ENCODE measurements at regions of chr14 and their contacts with region 1.

Region 1: DNA sequence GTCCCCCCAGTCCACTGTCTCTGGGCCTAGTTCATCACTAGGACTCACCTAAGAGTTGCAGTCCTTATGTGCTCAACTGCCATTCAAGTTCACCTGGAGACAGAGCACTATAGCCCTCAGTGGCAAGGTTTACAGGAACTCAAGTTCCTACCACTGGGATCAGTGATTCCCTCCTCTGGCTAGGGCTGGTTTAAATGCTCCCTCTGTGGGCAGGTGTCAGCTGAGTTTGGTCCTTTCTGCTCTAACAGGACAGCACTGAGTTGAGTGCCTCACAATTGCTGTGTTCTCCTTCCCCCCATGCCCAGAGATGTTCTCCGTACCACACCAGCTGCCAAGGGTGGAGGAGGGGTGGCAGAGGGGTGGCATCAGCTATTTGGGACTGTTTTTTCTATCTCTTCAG is 20.8 kb upstream of the SAV1 start:
- H3K4me3 Mint-ChIP-seq: no peak overlapping the region
- H3K27ac Mint-ChIP-seq: no peak overlapping the region
- H3K4me1 Mint-ChIP-seq: no peaks in the 10 kb centered on the region
- H3K27me3 Mint-ChIP-seq: no peaks in the 10 kb centered on the region

Region 2: DNA sequence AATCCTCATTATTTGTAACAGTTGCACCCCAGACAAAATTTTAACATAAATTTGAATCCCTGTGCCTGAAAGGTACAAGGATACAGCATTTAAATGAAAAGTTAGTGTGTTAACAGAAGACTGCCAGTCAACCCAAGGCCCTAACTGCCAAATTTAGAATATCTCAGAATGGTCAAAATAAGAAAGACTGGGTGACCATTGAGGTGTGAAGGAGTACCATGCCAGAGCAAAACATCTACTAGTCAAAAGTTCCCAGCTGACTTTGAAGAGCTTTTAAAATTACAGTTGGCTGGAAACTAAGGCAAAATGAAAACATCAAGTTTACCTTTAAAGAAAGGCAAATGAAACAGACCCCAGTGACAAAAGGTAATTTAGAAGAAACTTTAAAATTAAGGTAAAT is 39.2 kb before region 1 on chr14:
- intact Hi-C with region 1: loop called (anchors 5 kb)
- H3K4me3 Mint-ChIP-seq: no peak overlapping the region
- H3K27ac Mint-ChIP-seq: no peak overlapping the region
- H3K4me1 Mint-ChIP-seq: no peaks in the 10 kb centered on the region
- H3K27me3 Mint-ChIP-seq: no peaks in the 10 kb centered on the region

Region 3: DNA sequence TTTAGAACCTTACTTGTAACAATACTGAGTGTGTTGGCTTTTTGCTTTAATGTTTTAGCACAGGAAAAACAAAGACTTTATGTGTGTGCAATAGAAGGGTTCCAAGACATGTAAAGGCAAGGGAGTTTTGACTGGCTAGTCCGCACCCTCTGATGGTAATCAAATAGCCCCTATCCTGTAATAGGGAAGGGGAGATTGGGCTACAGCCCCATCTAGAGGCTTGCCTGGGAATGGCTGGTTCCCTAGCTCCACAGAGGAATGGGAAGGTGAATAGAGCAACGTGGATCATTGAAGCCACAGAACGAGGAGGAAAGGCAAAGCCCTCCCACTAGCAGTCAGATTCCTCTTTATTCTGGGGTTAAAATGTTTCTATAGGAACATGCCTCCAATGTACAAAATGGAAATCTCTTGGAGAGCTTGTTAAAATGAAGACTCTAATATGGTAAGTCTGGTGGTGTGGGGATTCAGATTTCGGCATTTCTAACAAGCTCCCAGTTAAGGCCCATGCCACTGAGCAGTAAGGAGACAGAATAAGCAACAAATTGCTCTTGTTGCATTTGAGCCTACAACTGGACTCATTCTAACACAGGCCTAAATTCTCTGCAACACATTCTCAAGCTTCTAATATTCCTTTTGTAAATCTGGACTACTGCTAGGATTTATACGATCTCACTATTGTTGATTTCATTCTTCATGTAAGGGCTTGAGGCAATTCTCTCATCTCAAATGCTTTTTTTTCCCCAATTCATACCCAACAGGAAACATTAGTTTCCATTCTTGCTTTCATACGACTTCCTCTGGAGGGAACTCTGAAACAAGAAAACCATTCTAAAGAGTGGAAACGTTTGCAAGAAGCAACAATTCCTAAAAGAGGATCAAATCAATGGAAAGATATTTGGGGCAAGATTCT is 85.0 kb after region 1 on chr14:
- intact Hi-C with region 1: no loop called
- H3K4me3 Mint-ChIP-seq: no peak overlapping the region
- H3K27ac Mint-ChIP-seq: no peak overlapping the region
- H3K4me1 Mint-ChIP-seq: peaks cover 1% of the 10 kb centered on the region
- H3K27me3 Mint-ChIP-seq: no peaks in the 10 kb centered on the region